ENCODE measurements at regions of chr5 and their contacts with region 1.

Region 1: GRCh38 chr5:178259623-178260536 is 27.3 kb upstream of the PHYKPL start:
- DNase-seq: no peak
- ATAC-seq: no peak
- H3K4me3 ChIP-seq: no peak overlapping the region
- H3K27ac ChIP-seq: no peak overlapping the region
- H3K4me1 ChIP-seq: no peaks in the 10 kb centered on the region
- H3K27me3 ChIP-seq: no peaks in the 10 kb centered on the region
- CTCF ChIP-seq: no peak

Region 2: DNA sequence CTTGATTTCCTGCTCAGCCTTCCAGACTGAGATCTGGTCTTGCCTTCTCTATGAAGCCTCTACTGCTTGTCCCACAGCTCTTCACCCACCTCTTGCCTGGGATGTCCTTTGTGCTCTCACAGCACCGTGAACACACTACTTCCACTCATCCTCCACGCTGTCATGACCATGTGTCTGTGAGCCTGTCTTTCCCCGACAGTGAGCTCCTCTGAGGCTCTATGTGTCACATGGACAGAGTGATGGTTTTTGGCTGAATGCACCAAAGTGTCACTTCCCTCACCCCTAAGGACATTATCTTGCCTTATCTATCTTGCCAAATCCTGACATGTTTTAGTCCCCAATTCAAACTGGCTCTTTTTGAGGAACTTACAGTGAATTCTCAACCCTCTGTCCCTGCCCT is 38.6 kb before region 1 on chr5:
- CTCF ChIA-PET with region 1: no interaction called
- POLR2A ChIA-PET with region 1: interaction called, 10 read pairs
- in situ Hi-C with region 1: no loop called
- intact Hi-C with region 1: no loop called
- DNase-seq: no peak
- ATAC-seq: no peak
- H3K4me3 ChIP-seq: no peak overlapping the region
- H3K27ac ChIP-seq: no peak overlapping the region
- H3K4me1 ChIP-seq: no peaks in the 10 kb centered on the region
- H3K27me3 ChIP-seq: no peaks in the 10 kb centered on the region
- CTCF ChIP-seq: no peak

Region 3: GRCh38 chr5:178228609-178229008 is 31.3 kb before region 1 on chr5:
- CTCF ChIA-PET with region 1: interaction called, 4 read pairs
- POLR2A ChIA-PET with region 1: interaction called, 11 read pairs
- in situ Hi-C with region 1: no loop called
- intact Hi-C with region 1: no loop called
- DNase-seq: no peak
- ATAC-seq: no peak
- H3K4me3 ChIP-seq: no peak overlapping the region
- H3K27ac ChIP-seq: no peak overlapping the region
- H3K4me1 ChIP-seq: peaks cover 17% of the 10 kb centered on the region
- H3K27me3 ChIP-seq: no peaks in the 10 kb centered on the region
- CTCF ChIP-seq: no peak

Measured in Panc1 (cell line).